CD4-positive, alpha-beta T cell (primary cell): ENCODE measurements at regions of chr12 and their contacts with region 1.

Region 1: GRCh38 chr12:1147821-1148220 is 156.8 kb downstream of the ERC1 start:
- DNase-seq: no peak
- ATAC-seq: no peak
- H3K4me3 ChIP-seq: no peak overlapping the region
- H3K4me3 Mint-ChIP-seq: no peak overlapping the region
- H3K27ac ChIP-seq: no peak overlapping the region
- H3K27ac Mint-ChIP-seq: no peak overlapping the region
- H3K4me1 ChIP-seq: no peaks in the 10 kb centered on the region
- H3K4me1 Mint-ChIP-seq: no peaks in the 10 kb centered on the region
- H3K27me3 ChIP-seq: no peaks in the 10 kb centered on the region
- H3K27me3 Mint-ChIP-seq: no peaks in the 10 kb centered on the region
- CTCF ChIP-seq: no peak

Region 2: DNA sequence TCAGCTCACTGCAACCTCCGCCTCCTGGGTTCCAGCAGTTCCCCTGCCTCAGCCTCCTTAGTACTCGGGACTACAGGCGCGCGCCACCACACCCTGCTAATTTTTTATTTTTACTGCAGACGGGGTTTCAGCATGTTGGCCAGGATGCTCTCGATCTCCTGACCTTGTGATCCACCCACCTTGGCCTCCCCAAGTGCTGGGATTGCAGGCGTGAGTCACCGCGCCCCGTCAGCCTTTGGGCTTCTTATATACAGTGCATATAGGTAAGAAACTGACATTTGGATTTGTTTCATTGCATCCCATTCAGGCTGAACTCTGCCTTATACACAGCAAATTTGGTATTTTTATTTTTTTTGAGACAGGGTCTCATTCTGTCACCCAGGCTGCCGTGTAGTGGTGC is 20.0 kb after region 1 on chr12:
- CTCF ChIA-PET with region 1: no interaction called
- POLR2A ChIA-PET with region 1: no interaction called
- intact Hi-C with region 1: no loop called
- DNase-seq: no peak
- ATAC-seq: no peak
- H3K4me3 ChIP-seq: no peak overlapping the region
- H3K4me3 Mint-ChIP-seq: no peak overlapping the region
- H3K27ac ChIP-seq: no peak overlapping the region
- H3K27ac Mint-ChIP-seq: no peak overlapping the region
- H3K4me1 ChIP-seq: no peaks in the 10 kb centered on the region
- H3K4me1 Mint-ChIP-seq: peaks cover 3% of the 10 kb centered on the region
- H3K27me3 ChIP-seq: no peaks in the 10 kb centered on the region
- H3K27me3 Mint-ChIP-seq: no peaks in the 10 kb centered on the region
- CTCF ChIP-seq: no peak

Region 3: DNA sequence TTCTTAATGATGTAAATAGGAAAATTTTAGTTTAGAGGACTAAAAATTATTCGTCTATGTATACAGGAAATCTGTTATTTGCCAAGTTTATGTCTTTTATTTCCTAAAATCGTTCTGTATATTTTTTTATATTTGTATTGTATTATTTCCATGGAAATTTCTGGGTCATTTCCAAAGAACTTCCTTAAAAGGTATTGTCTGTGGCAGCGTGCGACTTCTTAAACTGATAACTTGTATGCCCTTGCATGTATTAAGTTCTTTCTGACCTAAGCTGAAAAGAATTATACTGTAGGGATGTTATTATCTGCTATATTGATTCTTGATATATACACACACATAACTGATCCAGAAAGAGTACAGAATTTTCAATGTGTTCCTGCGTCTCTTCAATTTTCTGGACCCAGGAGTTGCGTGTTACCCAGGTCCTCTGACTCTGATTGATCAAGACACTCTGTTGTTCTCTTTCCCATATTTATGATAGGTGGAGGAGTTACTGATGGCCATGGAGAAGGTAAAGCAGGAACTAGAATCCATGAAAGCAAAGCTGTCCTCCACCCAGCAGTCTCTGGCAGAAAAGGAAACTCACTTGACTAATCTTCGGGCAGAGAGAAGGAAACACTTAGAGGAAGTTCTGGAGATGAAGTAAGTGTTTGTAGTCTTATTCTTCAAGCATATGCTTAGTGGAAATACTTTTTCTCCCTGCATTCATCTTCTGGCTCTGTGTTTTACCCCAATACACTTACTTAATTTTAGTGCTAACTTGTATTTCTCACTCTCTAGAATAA is 141.7 kb after region 1 on chr12:
- CTCF ChIA-PET with region 1: no interaction called
- POLR2A ChIA-PET with region 1: no interaction called
- intact Hi-C with region 1: loop called in 1 of 2 experiments (anchors 10 kb)
- DNase-seq: peak in 1 of 14 experiments; percentile 6
- ATAC-seq: no peak
- H3K4me3 ChIP-seq: no peak overlapping the region
- H3K4me3 Mint-ChIP-seq: no peak overlapping the region
- H3K27ac ChIP-seq: no peak overlapping the region
- H3K27ac Mint-ChIP-seq: no peak overlapping the region
- H3K4me1 ChIP-seq: no peaks in the 10 kb centered on the region
- H3K4me1 Mint-ChIP-seq: no peaks in the 10 kb centered on the region
- H3K27me3 ChIP-seq: no peaks in the 10 kb centered on the region
- H3K27me3 Mint-ChIP-seq: no peaks in the 10 kb centered on the region
- CTCF ChIP-seq: no peak